ENCODE measurements at regions of chr10 and their contacts with region 1.

Region 1: DNA sequence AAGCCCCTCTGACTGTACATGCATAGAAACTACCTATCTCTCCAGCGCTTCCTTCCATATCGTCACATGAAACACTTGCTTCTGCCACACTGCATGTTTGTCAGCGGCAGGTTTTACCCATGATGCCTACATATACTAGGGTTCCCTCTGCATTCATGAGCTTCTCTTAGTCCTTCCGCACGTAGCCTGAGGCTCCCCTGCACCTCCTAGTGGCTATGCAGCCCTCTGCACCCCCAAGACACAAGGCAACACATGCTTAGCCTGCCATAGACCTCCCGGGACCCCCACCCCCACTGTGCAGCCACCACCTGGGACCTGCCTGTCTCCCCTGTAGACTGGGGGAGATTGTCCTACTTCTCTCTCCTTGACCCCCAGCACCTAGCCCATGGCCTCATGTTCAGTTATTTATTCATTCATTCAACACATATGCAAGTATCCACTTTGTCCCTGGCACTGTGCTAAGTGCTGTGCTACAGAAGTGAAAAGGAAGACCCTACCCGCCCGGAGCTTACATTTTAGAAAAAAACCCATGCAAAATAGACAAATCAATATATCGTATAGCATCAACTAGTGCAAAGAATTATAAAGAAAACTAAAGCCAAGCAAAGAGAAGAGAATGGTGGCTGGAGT is 23.5 kb downstream of the TMEM273 start:
- DNase-seq: peak in 1 of 2 donors; percentile 95
- H3K4me3 ChIP-seq: no peak overlapping the region
- H3K27ac ChIP-seq: no peak overlapping the region
- H3K4me1 ChIP-seq: peaks cover 3% of the 10 kb centered on the region
- H3K27me3 ChIP-seq: no peaks in the 10 kb centered on the region
- CTCF ChIP-seq: peak in 2 of 3 experiments; percentile 34 to 60
- POLR2A ChIP-seq: no peak

Region 2: DNA sequence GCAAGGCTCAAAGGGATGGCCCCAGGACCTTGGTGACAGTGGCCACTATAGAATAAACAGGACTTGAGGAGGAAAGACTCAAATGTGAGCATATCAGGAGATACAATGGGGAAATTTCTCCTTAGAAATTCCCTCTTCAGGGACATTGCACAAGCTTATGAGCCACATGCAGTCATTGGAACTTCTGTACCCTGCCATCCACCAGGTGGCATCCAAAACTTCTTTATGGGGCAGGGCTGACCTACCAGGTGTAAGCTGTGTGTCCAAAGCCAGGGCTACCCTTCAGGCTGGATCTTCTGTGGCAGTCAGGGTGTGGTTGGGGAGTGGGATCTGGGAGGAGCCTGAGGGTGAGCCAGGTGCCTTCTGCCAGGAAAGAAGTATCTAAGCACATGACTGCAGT is 188.5 kb before region 1 on chr10:
- intact Hi-C with region 1: loop called (anchors 5 kb)
- DNase-seq: no peak
- H3K4me3 ChIP-seq: no peak overlapping the region
- H3K27ac ChIP-seq: no peak overlapping the region
- H3K4me1 ChIP-seq: peaks cover 9% of the 10 kb centered on the region
- H3K27me3 ChIP-seq: no peaks in the 10 kb centered on the region
- CTCF ChIP-seq: peak in 2 of 3 experiments; percentile 21 to 27
- POLR2A ChIP-seq: no peak